Activated T-helper 2 cell treated with anti-CD3 and anti-CD28 coated beads, Interferon-gamma antibody, Interleukin-2, Interleukin-4, amounts not matched to agents 10 μg/mL and 5 μg/mL and 100 μg/mL, durations not matched to agents 14 hours and 24 hours and 36 hours (primary cell): ENCODE measurements at regions of chr17 and their contacts with region 1.

Region 1: DNA sequence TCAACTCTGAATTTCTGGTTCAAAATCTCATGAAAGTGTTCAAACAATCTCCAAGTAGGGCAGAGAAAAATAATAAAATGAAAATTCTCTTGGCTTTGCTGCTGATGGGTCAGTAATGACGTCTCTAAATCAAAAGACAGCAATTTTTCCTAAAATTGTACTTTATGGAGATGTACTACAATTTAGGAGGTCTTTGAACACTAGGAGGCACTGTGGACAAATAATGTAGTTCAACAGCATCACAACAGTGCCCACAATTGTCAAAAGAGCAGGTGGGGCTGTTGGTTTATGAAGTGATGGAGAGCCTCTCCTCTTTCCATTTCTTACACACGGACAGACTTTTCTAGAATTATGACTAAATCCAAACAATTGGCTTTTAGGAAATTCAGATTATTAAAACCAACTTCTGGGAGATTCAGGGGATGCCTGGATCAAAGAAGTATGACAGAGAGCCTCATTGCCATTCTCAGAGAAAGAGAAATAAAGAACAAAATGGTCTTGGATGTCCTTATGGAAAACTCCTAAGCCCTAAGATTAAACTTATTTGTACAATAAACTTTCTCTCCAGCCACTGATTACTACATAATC is 23.8 kb downstream of the EZH1 start:
- DNase-seq: no peak
- H3K4me3 Mint-ChIP-seq: no peak overlapping the region
- H3K27ac Mint-ChIP-seq: no peak overlapping the region
- H3K4me1 Mint-ChIP-seq: no peaks in the 10 kb centered on the region
- H3K27me3 Mint-ChIP-seq: no peaks in the 10 kb centered on the region

Region 2: GRCh38 chr17:42744283-42744805 is 23.3 kb after region 1 on chr17:
- intact Hi-C with region 1: no loop called
- DNase-seq: no peak
- H3K4me3 Mint-ChIP-seq: peak overlapping the region; percentile 94
- H3K27ac Mint-ChIP-seq: peak overlapping the region; percentile 96
- H3K4me1 Mint-ChIP-seq: peaks cover 18% of the 10 kb centered on the region
- H3K27me3 Mint-ChIP-seq: peaks cover 30% of the 10 kb centered on the region

Region 3: GRCh38 chr17:42760652-42761581 is 39.8 kb after region 1 on chr17 and contains the start of gene RAMP2:
- intact Hi-C with region 1: loop called (anchors 1 kb)
- DNase-seq: no peak
- H3K4me3 Mint-ChIP-seq: peak within 1 kb of the TSS; percentile 22
- H3K27ac Mint-ChIP-seq: no peak within 1 kb of the TSS
- H3K4me1 Mint-ChIP-seq: peaks cover 5% of the 10 kb centered on the region
- H3K27me3 Mint-ChIP-seq: peaks cover 56% of the 10 kb centered on the region
- total RNA-seq, gene RAMP2: not detected in 2 replicates

Region 4: GRCh38 chr17:42855048-42855596 is 134.0 kb after region 1 on chr17:
- intact Hi-C with region 1: no loop called
- DNase-seq: no peak
- H3K4me3 Mint-ChIP-seq: no peak overlapping the region
- H3K27ac Mint-ChIP-seq: no peak overlapping the region
- H3K4me1 Mint-ChIP-seq: no peaks in the 10 kb centered on the region
- H3K27me3 Mint-ChIP-seq: no peaks in the 10 kb centered on the region

Region 5: DNA sequence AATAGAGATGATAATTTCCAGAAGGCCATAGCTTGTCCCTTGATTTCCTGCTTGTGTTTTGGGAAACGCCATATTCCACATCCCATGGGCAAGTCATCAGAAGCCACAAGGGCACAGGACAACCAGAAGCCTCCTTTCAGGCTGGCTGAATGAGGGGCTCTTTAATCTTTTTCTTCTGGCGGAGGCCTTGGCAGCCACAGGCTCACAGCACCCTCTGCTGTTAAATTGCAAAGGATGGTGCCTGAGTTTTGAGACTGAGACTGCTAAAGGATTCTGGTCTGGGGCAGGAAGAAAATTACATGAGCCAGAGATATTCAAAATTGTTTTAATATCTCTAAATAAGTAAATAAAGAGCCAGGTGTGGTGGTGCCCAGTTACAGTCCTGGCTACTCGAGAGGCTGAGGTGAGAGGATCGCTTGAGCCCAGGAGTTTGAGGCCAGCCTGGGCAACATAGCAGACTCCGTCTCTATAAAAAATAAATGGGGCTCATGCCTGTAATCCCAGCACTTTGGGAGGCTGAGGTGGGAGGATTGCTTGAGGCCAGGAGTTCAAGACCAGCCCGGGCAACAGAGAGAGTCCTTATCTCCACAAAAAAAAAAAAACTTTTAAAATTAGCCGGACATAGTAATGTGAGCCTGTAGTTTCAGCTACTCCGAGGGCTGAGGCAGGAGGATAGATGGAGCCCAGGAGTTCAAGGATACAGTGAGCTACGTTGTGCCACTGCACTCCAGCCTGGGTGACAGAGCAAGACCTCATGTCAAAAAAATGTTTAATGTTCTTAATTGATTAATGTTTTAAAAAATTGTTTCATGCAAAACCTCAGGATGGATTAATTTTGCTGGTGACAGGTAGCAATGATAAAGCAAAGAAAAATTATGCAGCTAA is 216.9 kb after region 1 on chr17:
- intact Hi-C with region 1: loop called (anchors 10 kb)
- DNase-seq: no peak
- H3K4me3 Mint-ChIP-seq: no peak overlapping the region
- H3K27ac Mint-ChIP-seq: no peak overlapping the region
- H3K4me1 Mint-ChIP-seq: no peaks in the 10 kb centered on the region
- H3K27me3 Mint-ChIP-seq: peaks cover 11% of the 10 kb centered on the region